ENCODE measurements at regions of chr21 and their contacts with region 1.

Region 1: DNA sequence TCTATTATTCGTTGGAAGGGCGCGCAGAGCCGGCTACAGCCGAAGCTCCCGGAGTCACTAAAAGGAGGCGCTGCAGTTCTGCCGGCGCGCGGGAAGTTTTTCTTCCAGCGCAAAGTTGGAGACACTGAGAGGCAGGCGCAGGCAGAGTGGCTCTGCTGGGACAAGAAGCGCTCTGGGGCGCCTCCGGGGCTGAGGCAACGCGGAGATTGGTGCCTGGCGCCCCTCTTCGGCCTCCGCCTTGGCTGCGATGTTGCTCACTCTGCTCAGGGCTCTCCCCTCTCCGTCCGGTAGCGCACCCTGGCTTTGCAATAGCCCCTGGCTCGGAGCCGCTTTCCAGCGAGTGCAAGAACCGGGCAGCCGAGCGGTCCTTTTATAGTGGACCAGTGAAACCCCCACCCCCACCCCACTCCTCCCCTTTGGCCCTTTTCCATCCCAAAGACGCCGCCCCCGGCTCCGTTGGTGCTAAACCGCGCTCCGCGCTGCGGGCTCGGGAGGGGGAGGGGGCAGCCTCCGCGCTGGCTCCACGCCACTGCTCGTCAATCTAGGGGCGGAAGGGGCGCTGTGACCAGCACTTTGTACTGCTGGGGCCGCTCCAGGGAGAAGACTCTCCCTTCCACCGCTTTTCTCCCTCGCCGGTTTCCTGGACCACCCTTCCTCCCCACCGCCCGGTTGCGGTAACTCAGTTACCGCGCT is at the start of gene ADAMTS1:
- DNase-seq: peak; percentile 84 to 97 (median 90)
- ATAC-seq: peak; percentile 59
- H3K4me3 ChIP-seq: peak within 1 kb of the TSS; percentile 43 to 83
- H3K27ac ChIP-seq: peak within 1 kb of the TSS; percentile 84 to 90
- H3K4me1 ChIP-seq: peaks cover 12 to 42% of the 10 kb centered on the region in 2 donors
- H3K27me3 ChIP-seq: peaks cover 0 to 74% of the 10 kb centered on the region in 2 donors
- CTCF ChIP-seq: no peak
- polyA plus RNA-seq, gene ADAMTS1: 71.5 to 147 (median 116) TPM

Region 2: DNA sequence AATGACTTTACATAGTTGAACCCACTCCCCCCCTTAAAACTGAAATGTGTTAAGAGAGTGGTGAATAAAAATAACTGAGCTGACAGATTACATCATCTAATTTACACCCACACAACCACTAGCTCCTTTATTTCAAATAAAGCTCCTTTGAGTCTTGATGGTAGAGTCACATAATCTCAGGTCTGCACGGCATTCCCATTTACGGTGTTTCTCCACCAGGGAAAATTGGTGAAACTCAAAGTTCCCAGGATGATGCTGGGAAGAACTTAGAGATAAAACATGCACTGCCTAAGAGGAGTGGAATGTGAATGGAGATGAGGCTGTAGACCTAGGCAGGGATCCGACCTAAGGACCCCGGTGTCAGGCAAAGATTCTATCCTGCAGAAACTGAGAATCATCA is 849.5 kb after region 1 on chr21:
- intact Hi-C with region 1: loop called in 1 of 2 experiments (anchors 5 kb)
- DNase-seq: no peak
- ATAC-seq: no peak
- H3K4me3 ChIP-seq: no peak overlapping the region
- H3K27ac ChIP-seq: no peak overlapping the region
- H3K4me1 ChIP-seq: no peaks in the 10 kb centered on the region
- H3K27me3 ChIP-seq: no peaks in the 10 kb centered on the region
- CTCF ChIP-seq: no peak

Region 3: DNA sequence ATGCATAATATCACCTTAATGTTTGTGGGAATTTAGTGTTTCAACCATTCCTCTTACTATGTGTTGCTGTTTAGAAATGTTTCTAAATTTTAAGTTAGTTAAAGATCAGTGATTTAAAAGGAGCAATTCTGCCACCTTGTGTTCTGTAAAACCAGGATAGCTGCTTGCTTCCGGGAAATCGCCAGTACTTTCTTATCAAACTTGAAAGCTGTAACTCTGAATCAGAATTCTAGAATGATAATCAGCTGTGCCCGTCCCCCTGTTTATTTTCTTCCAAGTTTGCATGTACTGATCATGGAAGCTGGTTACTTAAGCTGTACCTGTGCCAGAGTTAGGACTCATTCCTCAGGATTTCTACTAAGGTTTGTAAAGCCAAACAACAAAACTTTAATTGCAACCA is 1491.1 kb after region 1 on chr21:
- intact Hi-C with region 1: loop called in 1 of 2 experiments (anchors 10 kb)
- DNase-seq: peak in 2 of 4 donors; percentile 70 to 71
- ATAC-seq: peak; percentile 34
- H3K4me3 ChIP-seq: no peak overlapping the region
- H3K27ac ChIP-seq: no peak overlapping the region
- H3K4me1 ChIP-seq: peaks cover 0 to 7% of the 10 kb centered on the region in 2 donors
- H3K27me3 ChIP-seq: no peaks in the 10 kb centered on the region
- CTCF ChIP-seq: peak; percentile 18 to 21

Region 4: DNA sequence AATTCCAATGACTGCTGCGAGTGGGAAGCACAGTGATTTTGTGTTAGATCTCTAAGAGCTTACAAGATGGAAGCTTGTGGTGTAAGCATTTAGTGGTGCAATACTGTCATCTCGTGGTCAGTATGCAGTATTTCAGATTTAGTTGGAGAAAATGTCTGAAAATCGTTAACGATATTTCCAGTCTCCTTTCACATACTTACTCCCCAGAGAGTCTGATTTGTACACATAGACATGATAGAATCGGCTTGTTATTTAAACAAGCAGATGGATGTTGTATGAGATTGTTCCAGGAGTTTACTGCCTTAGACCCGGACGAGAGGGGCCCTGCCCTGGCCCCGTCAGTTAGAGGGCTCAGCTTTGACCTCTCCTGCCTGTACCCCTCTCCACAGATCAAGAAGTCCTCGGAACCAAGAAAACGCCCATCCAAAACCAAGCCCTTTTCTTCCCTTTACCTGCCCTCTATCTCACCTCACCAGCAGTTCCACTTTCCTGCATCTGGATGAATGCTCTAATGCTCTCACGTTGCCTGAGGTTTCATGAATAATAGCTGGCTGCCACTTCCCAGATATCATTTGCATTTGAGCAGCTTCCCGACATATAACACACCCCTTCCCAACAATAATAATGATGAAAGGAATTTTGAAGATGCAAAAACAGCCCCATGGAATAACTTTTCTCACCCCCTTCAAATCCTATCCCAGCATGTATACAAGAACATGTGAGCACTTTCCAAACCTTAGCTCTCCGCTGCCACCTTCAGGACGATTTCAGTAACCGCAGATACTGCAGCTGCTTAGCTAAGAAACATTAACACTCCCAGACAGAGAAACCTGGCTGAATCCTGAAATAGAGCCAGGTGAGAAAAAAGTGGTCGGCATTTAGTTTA is 1900.2 kb after region 1 on chr21:
- intact Hi-C with region 1: loop called in 1 of 2 experiments (anchors 10 kb)
- DNase-seq: peak; percentile 29 to 89 (median 75)
- ATAC-seq: peak; percentile 98
- H3K4me3 ChIP-seq: peak overlapping the region; percentile 17 to 37
- H3K27ac ChIP-seq: peak overlapping the region; percentile 47 to 56
- H3K4me1 ChIP-seq: peaks cover 0 to 12% of the 10 kb centered on the region in 2 donors
- H3K27me3 ChIP-seq: no peaks in the 10 kb centered on the region
- CTCF ChIP-seq: peak; percentile 77 to 87